ENCODE measurements at regions of chr13 and their contacts with region 1.

Region 1: DNA sequence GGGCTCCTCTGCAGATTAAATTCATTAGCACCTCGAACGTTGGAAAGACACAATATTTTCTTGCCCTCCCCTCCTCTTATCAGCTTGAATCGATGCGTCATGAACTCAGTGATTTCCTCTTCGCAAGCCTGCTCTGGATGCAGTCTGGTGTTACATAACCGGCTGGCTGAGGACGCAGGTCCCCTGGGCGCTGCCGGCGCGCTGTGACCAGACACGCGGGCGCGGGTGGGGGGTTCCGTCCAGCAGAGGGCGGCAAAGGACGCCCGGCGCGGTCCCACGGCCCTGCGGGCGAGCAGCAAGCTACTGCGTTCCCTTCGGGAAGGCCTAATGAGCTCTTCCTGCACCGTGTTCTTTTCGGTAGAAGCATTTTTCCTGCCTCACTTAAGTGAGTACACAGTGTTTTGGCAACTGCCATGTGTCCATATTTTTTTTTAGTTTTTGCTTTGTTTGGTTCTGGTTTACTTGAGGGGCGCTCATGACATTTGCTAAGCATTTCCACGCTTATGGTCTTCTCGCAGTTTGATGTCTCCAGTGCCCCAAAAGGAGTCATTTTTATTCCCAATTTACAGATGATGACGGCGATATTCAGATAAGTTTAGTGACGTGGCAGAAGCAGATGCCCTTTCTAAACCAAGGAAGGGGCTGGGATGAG is 112.2 kb upstream of the MBNL2 start:
- DNase-seq: peak; percentile 52
- H3K4me3 ChIP-seq: peak overlapping the region; percentile 25; the same call in 1 of the 2 replicates
- CTCF ChIP-seq: peak; percentile 98

Region 2: GRCh38 chr13:97141564-97142005 is 31.6 kb after region 1 on chr13:
- CTCF ChIA-PET with region 1: interaction called, 15 read pairs
- POLR2A ChIA-PET with region 1: no interaction called
- DNase-seq: peak; percentile 45
- H3K4me3 ChIP-seq: no peak overlapping the region
- CTCF ChIP-seq: no peak

Region 3: DNA sequence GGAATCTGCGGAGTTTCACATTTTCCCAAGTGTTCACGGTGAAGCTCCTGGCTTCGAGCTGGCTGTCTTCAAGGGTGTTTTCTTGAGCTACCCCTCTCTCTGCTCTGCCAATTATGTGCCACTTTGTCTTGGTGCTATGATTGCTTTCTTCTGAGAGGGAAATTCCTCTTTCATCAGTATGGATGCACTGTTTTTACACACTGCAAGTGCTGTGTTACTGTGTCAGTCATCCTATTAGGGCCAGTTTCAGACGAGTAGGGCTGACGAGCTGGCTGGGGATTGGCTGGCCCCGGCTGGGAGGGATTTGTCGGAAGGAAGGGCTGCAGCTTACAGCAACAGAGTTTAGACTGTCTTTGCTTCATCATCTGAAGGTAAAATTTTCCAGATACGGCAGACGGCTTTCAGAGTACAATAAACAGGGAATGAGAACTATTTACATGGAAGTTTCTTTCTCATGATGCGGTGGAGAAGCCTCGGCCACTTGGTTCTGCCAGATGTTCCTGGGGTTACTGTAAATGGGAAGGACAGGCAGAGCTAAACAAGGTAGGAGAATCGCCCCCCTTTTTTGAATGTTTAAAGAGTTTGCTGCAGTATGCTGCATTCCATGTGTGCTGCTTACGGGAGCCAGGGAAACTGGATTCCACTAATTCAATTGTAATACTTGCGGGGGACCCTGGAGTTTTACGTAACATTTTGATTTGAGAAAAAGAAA is 112.2 kb after region 1 on chr13 and contains the start of gene MBNL2:
- CTCF ChIA-PET with region 1: interaction called, 50 read pairs
- POLR2A ChIA-PET with region 1: interaction called, 3 read pairs
- DNase-seq: peak; percentile 75
- H3K4me3 ChIP-seq: peak within 1 kb of the TSS; percentile 73
- CTCF ChIP-seq: no peak

Region 4: DNA sequence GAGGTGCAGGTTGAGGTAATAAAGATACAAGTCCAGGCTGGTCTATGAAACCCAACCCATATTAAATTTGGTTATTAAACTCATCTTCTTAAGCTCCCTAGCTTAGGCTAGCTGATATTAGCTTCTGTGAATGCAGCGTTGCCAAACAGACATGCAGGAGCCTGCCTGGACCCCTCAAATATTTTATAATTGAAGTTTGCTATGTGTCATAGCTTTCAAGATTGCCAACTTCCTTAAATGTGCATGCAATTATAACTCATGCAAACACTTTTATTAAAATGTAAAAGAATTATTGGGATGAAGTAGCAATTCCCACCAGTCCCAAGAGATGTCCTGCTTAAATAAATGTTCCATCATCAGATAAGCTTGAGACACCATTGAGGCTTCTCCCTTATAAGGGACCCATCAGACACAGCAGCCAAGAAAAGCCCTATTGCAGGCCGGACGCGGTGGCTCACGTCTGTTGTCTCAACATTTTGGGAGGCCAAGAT is 163.4 kb after region 1 on chr13:
- CTCF ChIA-PET with region 1: interaction called, 10 read pairs
- POLR2A ChIA-PET with region 1: no interaction called
- DNase-seq: no peak
- H3K4me3 ChIP-seq: no peak overlapping the region
- CTCF ChIP-seq: no peak

Region 5: DNA sequence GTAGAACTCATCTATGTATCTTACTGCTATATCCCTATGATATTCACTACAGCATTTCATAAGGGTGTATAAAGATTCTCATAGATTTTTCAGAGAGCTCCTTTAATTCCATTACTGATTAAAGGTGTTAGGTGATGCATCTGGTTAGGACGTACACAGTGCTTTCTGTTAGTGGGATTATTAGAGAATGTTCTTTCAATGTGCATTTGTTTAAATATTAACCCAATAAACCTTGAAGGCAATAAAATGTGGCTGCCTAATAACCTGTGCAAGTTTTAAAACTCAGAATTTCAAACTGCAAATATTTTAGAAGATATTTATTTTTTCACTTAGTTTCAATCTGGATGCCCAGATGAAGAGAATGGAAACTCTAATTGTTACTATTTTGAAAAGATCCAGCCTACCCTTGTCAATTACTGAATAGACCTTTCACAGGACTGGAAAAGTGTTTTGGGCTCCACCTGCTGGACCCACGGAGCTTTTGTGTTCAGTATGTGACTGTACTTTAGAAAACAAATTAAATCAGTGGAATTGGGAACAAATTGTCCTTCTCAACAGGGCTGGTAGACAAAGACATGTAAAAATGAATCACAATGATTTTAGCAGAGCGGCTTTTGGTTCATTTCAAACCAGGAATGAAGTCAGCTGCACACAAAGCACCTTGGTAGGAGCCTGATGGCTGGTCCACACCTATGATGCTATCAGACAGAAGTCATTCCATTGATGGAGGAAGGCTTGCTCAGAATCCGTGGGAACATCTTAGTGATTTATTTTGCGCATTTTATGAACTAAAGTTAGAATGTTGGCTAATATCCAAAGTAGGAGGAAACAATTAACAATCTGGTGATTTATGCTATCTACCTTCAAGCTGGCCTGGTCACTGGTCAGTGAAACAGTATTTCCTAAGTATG is 234.6 kb after region 1 on chr13:
- CTCF ChIA-PET with region 1: interaction called, 133 read pairs
- POLR2A ChIA-PET with region 1: no interaction called
- DNase-seq: no peak
- H3K4me3 ChIP-seq: no peak overlapping the region
- CTCF ChIP-seq: peak; percentile 64

Region 6: GRCh38 chr13:97798836-97799235 is 688.9 kb after region 1 on chr13:
- CTCF ChIA-PET with region 1: interaction called, 10 read pairs
- POLR2A ChIA-PET with region 1: no interaction called
- DNase-seq: no peak
- H3K4me3 ChIP-seq: no peak overlapping the region
- CTCF ChIP-seq: no peak